ENCODE measurements at regions of chr20 and their contacts with region 1.

Region 1: DNA sequence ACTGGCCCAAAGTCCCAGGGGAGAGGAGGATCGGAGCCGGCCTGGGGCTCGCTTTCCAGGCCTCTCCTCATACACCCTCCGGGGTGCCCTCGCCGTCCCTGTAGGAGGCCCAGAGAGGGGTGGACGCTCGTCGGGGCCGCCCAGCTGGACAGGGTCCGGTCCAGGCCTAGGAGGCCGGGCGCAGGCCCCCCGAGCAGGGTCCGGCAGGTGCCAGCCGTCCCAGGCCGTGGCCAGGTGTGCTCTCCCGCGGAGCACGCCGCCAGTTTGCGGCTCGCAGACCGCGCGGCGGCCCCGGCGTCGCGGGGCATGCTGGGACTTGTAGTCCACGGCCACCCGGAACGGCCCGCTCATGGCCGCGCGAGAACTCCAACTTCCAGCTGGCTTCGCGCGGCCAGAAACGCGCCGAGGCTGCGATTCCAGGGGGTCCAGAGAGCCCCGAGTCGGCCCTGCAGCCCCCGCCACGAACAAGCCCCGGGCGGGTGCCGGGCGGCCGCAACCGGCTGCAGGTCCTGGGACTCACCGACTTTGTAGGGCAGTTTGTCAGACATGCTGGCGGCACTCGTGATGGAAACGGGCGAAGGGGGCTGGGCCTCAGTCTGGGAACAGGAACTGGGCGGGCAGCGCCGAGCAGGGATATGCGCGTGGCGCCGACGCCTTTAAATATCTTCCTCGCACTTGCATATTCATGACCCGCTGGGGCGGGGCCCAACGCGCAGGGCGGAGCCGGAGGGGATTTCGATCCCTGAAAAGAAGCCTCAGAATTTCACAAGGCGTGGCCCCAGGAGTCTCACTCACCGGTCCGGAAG is at the start of gene AHCY:
- DNase-seq: peak; percentile 98
- H3K4me3 ChIP-seq: peak within 1 kb of the TSS; percentile 69
- H3K27ac ChIP-seq: peak within 1 kb of the TSS; percentile 93
- H3K4me1 ChIP-seq: peaks cover 15% of the 10 kb centered on the region
- H3K27me3 ChIP-seq: no peaks in the 10 kb centered on the region
- CTCF ChIP-seq: no peak
- total RNA-seq, gene AHCY: 284 and 292 TPM in 2 replicates

Region 2: DNA sequence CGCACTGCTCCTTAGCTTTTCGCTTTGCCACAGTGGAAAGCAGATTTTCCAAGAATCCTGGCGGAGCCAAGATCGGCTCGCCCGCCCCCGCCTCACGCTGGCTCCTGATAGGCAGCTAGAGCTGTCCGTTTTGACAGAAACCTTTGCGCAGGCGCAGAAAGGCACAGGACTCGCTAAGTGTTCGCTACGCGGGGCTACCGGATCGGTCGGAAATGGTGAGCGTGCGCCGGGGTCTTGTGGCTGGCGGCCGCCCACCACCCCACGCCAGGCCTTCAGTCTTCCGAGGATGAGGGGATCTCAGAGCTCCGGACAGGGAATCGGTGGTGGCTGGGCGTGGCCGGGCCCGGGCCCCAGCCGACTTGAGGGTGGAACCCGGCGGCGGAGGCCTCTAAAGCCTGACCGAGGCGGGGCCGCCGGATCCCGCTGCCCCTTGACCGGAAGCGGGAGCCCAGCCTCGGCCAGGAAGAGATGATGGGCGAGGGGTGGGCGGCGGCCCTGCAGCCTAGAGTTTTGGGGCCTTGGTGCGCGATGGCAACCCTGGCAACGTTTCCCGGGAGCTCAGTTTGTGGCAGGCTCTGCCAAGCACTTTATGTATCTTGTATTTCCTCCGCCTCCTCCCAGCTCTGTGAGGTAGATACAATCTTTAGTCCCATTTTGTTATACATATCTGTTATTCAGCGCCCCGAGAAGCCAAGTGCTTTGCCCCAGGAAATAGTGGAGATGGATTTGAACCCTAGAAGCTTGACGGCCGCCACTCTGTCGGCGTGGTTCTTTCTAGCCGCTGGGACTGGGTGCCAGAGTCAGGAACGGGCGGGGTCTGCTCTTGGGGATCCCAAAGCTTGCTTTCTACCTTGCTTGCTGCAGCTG is 213.6 kb after region 1 on chr20 and contains the start of gene DYNLRB1:
- CTCF ChIA-PET with region 1: no interaction called
- POLR2A ChIA-PET with region 1: interaction called, 4 read pairs
- intact Hi-C with region 1: loop called (anchors 5 kb)
- DNase-seq: peak; percentile 97
- H3K4me3 ChIP-seq: peak within 1 kb of the TSS; percentile 91
- H3K27ac ChIP-seq: peak within 1 kb of the TSS; percentile 87
- H3K4me1 ChIP-seq: peaks cover 3% of the 10 kb centered on the region
- H3K27me3 ChIP-seq: no peaks in the 10 kb centered on the region
- CTCF ChIP-seq: no peak
- total RNA-seq, gene DYNLRB1: 142 and 144 TPM in 2 replicates